Ovary (tissue), 10 donors: ENCODE measurements at regions of chr7 and their contacts with region 1.

Region 1: GRCh38 chr7:107168233-107169119 is at the start of gene HBP1:
- DNase-seq: peak; percentile 99 to 100 (median 100)
- H3K4me3 ChIP-seq: peak within 1 kb of the TSS; percentile 99
- H3K27ac ChIP-seq: peak within 1 kb of the TSS; percentile 98 to 99
- H3K4me1 ChIP-seq: peaks cover 8% of the 10 kb centered on the region
- H3K27me3 ChIP-seq: no peaks in the 10 kb centered on the region
- CTCF ChIP-seq: no peak
- EP300 ChIP-seq: no peak
- POLR2A ChIP-seq: peak; percentile 72
- total RNA-seq, gene HBP1: 31.8 to 121 (median 55.4) TPM

Region 2: GRCh38 chr7:105298439-105298907 is 1870.0 kb before region 1 on chr7:
- intact Hi-C with region 1: loop called in 1 of 4 experiments (anchors 5 kb)
- DNase-seq: no peak
- H3K4me3 ChIP-seq: no peak overlapping the region
- H3K27ac ChIP-seq: no peak overlapping the region
- H3K4me1 ChIP-seq: no peaks in the 10 kb centered on the region
- H3K27me3 ChIP-seq: no peaks in the 10 kb centered on the region
- CTCF ChIP-seq: no peak
- EP300 ChIP-seq: no peak
- POLR2A ChIP-seq: no peak

Region 3: DNA sequence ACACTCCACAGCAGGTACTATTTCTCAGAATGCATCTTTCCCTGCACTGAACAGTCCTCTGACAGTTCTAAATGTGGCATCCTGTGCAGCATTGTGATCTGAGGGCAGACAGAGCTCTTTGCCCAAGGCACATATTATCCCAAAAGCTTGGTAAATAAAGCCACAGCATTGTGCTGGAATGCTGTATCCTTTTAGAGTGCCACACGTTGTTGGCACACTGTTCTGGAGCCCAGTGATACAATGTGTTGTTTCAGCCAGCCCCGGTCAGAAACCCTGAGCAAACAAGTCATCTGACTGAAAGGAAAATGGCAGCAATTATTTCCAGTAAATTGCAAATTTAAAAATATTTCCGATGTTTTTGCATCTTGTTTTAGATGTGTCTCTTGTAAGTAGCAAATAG is 929.1 kb before region 1 on chr7:
- intact Hi-C with region 1: loop called in 1 of 4 experiments (anchors 5 kb)
- DNase-seq: no peak
- H3K4me3 ChIP-seq: no peak overlapping the region
- H3K27ac ChIP-seq: no peak overlapping the region
- H3K4me1 ChIP-seq: no peaks in the 10 kb centered on the region
- H3K27me3 ChIP-seq: no peaks in the 10 kb centered on the region
- CTCF ChIP-seq: no peak
- EP300 ChIP-seq: no peak
- POLR2A ChIP-seq: no peak

Region 4: GRCh38 chr7:106915873-106916272 is 252.6 kb before region 1 on chr7:
- intact Hi-C with region 1: no loop called
- DNase-seq: no peak
- H3K4me3 ChIP-seq: no peak overlapping the region
- H3K27ac ChIP-seq: no peak overlapping the region
- H3K4me1 ChIP-seq: no peaks in the 10 kb centered on the region
- H3K27me3 ChIP-seq: no peaks in the 10 kb centered on the region
- CTCF ChIP-seq: no peak
- EP300 ChIP-seq: no peak
- POLR2A ChIP-seq: no peak